Activated CD4-positive, alpha-beta T cell treated with anti-CD3 and anti-CD28 coated beads, Interleukin-2, amount 10 ng/mL, durations not matched to agents 24 days and 14 days (primary cell): ENCODE measurements at regions of chr6 and their contacts with region 1.

Region 1: DNA sequence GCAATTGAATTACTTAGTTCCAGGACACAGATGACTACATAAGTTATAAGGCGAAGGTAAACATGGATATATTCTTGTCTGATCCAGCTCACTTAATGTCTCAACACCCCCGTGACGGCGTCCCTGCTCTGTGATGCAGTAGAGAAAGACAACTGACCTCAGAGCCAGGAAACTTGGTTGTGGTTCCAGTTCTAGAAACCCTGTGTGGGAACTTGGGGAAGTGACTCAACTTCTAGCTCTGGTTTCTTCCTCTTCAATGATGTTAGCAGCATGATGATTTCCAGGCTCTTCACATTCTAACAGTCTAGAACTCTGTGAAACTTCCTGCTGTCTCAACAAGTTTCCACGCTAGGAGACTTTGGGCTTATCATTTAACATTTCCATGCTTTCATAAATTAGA is 18.4 kb downstream of the LAMA4 start:
- DNase-seq: peak; percentile 78
- H3K4me3 Mint-ChIP-seq: no peak overlapping the region
- H3K27ac Mint-ChIP-seq: no peak overlapping the region
- H3K4me1 Mint-ChIP-seq: peaks cover 17% of the 10 kb centered on the region
- H3K27me3 Mint-ChIP-seq: peaks cover 39% of the 10 kb centered on the region

Region 2: GRCh38 chr6:112216699-112217551 is 19.0 kb before region 1 on chr6:
- intact Hi-C with region 1: no loop called
- DNase-seq: no peak
- H3K4me3 Mint-ChIP-seq: no peak overlapping the region
- H3K27ac Mint-ChIP-seq: no peak overlapping the region
- H3K4me1 Mint-ChIP-seq: no peaks in the 10 kb centered on the region
- H3K27me3 Mint-ChIP-seq: peaks cover 49% of the 10 kb centered on the region

Region 3: DNA sequence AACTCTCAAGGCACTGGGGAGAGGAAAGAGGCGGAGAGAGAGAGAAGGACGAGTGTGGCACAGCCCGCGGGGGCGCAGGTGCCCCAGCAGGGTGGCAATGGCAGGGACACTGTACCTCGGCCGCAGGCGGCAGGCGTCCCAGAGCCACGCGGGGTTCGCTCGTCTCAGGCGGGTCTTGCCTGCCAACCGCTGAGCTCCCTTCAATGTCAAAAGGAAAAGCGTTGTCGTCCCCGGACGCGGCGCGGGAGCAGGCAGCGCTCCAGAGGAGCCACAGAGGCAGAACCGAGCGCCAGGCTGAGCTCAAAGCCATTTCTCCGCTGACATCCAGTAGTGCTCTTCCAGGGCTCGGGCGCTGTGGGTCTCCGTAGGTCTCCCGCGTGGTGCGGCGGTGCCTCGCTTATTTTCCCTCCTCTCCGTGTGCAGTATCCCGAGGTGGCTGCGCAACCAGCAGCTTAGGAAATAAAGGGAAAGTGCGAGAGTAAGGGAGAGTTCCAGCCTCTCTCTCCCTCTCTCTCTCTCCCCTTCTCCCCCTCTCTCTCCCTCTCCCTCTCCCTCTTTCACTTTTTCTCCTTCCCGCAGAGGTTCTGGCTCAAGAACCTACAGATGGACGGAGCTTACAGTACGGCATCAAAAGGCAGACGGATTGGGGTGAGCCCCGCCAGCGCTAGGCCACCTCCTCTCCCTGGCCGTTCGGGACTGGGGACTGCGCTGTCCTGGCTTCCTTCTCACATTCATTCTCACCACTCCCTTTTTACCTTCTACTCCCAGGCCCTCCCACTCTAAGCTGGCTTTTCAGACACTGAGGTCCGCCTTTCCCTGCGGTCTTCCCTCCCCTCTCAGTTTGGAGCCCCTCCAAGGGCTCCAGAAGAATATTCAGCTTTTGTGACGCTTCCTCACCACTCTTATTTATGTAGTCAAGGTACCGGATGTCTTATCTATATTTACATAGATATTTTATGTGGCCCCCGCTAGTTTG is 18.2 kb after region 1 on chr6 and contains the start of gene LAMA4:
- intact Hi-C with region 1: no loop called
- DNase-seq: peak; percentile 68
- H3K4me3 Mint-ChIP-seq: peak within 1 kb of the TSS; percentile 71
- H3K27ac Mint-ChIP-seq: no peak within 1 kb of the TSS
- H3K4me1 Mint-ChIP-seq: peaks cover 12% of the 10 kb centered on the region
- H3K27me3 Mint-ChIP-seq: peaks cover 64% of the 10 kb centered on the region
- total RNA-seq, gene LAMA4: not detected in 2 replicates

Region 4: DNA sequence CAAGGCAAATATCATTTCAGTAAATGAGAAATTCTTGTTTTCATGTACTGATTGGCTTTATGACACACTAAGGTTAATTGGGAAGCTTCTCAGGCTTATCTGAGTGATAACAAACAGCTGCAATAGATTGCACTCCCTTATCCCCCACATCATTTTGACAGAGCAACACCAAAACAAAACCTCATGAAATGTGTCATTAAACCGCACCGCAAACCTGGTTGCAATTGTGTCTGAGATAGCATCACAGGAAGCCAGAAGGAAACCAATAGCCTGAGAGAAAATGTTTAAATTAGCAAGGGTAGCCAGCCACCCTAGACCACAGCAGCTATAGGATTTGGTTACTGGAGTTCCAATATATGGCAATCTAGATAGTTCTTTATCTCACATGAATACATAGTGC is 50.1 kb after region 1 on chr6:
- intact Hi-C with region 1: loop called (anchors 1 kb)
- DNase-seq: peak; percentile 90
- H3K4me3 Mint-ChIP-seq: no peak overlapping the region
- H3K27ac Mint-ChIP-seq: peak overlapping the region; percentile 63
- H3K4me1 Mint-ChIP-seq: peaks cover 19% of the 10 kb centered on the region
- H3K27me3 Mint-ChIP-seq: peaks cover 45% of the 10 kb centered on the region